Activated CD4-positive, alpha-beta T cell treated with anti-CD3 and anti-CD28 coated beads for 36 hours (primary cell): ENCODE measurements at regions of chr10 and their contacts with region 1.

Region 1: DNA sequence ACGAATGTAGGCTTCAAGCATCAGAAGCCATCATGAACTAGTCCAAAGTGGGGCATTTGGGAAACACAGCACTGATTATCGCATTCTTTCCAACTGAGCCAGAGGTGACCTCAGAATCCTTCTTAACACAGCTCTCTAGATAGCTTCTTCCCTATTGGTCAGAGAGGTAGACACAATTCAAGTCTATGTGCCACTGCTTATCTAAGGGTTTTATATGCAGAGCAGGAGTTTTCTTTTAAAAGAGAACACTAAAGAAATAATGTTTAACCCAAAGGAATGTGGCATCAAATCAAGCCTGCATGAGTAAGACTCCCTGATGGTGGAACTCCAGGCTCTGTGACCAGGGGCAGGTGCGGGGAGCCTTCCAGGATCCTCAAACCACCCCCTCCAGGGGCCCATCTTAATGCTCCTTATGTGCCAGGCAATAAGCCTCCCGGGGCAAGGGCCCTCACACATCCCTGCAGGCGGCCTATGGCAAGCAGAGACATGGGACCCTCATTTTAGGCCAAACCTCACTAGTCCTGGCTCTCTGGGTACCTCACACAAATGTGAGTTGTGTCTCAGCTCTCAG is 13.8 kb downstream of the HSPA12A start:
- DNase-seq: no peak
- ATAC-seq: no peak
- H3K4me3 Mint-ChIP-seq: no peak overlapping the region
- H3K27ac Mint-ChIP-seq: no peak overlapping the region
- H3K4me1 Mint-ChIP-seq: peaks cover 21% of the 10 kb centered on the region
- H3K27me3 Mint-ChIP-seq: peaks cover 53% of the 10 kb centered on the region

Region 2: GRCh38 chr10:116674901-116675423 is 53.6 kb before region 1 on chr10:
- CTCF ChIA-PET with region 1: no interaction called
- POLR2A ChIA-PET with region 1: no interaction called
- intact Hi-C with region 1: loop called in 1 of 2 experiments (anchors 5 kb)
- DNase-seq: no peak
- ATAC-seq: no peak
- H3K4me3 Mint-ChIP-seq: no peak overlapping the region
- H3K27ac Mint-ChIP-seq: no peak overlapping the region
- H3K4me1 Mint-ChIP-seq: no peaks in the 10 kb centered on the region
- H3K27me3 Mint-ChIP-seq: peaks cover 22% of the 10 kb centered on the region